ENCODE measurements at regions of chr6 and their contacts with region 1.

Region 1: GRCh38 chr6:168541307-168541706 is 100.3 kb downstream of the SMOC2 start:
- DNase-seq: no peak
- H3K4me3 ChIP-seq: no peak overlapping the region
- H3K27ac ChIP-seq: peak overlapping the region in 2 of 4 donors; percentile 42 to 79
- H3K4me1 ChIP-seq: peaks cover 0 to 36% (median 23%) of the 10 kb centered on the region in 4 donors
- H3K27me3 ChIP-seq: no peaks in the 10 kb centered on the region
- CTCF ChIP-seq: no peak
- EP300 ChIP-seq: no peak
- POLR2A ChIP-seq: no peak

Region 2: DNA sequence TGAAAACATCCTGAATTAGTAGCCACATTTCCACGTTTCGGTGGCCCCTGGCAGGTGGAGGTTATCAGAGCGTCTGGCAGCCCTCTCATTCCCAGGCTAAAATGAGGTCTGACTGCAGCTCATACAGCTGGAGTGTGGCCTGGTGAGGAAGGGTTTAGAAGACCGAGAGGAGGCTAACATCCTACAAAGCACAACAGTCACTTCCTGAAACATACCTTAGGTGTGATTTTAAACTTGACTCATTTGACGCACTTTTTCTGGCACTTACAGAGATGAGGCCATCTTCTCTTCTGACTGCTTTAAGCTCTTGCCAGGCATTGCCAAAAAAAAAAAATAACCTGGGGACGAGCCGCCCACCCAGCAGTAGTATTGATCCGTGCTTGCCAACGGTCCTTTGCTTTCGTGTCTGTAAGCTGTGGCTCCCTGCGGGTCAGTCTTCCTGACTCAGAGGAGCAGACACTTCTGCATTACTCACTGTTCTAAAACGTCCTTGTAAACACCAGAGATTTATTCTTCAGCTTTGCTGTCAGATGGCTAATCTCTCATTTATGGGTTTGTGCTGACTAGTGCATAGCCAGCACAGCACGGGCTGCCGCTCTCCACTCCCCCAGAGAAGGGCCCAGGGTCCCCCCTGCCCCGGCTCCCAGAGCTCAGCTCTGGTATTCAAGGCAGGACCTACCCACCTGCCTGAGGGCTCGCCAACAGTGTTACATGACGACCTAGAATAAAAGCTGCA is 383.9 kb before region 1 on chr6:
- intact Hi-C with region 1: no loop called
- DNase-seq: peak; percentile 74
- H3K4me3 ChIP-seq: peak overlapping the region in 2 of 4 donors; percentile 3 to 28
- H3K27ac ChIP-seq: peak overlapping the region; percentile 42 to 83 (median 78)
- H3K4me1 ChIP-seq: peaks cover 2 to 80% (median 62%) of the 10 kb centered on the region in 4 donors
- H3K27me3 ChIP-seq: no peaks in the 10 kb centered on the region
- CTCF ChIP-seq: no peak
- EP300 ChIP-seq: peak; percentile 46 to 95 (median 78)
- POLR2A ChIP-seq: no peak

Region 3: DNA sequence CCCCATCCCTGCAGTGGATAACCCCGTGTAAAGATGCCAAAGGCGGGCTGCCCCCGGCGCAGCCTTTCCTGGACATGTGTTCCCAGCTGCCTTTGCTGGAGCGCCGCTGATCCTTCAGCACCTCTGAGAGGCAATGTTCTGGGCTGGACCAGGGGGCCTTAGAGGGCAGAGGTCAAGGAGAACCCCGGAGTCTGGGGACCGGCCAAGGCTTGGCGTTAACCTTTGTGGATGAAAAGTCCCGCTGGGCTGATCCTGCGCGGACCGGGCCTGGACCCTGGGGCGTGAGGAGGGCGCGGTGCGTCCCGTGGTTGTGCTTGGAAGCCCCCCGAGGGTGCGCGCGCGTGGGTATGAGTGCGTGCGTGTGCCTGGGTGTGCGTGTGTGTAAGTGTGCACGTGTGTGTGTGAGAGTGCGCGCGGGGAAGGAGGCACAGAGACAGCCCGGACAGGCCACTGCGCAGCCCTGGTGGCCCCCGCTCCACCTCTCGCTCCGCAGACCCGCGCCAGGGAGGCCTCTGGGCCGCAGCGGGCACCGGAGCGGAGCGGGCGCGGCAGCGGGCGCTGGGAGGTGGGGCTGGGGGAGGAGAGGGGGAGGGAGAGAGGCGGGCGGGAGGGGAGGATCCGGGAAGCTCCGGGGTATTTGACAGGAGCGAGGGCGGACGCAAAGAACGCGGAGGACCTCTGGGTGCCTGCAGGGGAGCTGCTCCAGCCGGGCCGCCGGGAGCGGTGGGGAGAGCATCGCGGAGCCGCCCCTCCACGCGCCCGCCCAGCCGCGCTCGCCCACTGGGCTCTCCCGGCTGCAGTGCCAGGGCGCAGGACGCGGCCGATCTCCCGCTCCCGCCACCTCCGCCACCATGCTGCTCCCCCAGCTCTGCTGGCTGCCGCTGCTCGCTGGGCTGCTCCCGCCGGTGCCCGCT is 100.5 kb before region 1 on chr6 and contains the start of gene SMOC2:
- intact Hi-C with region 1: loop called (anchors 2 kb)
- DNase-seq: no peak
- H3K4me3 ChIP-seq: peak within 1 kb of the TSS; percentile 49 to 75 (median 58)
- H3K27ac ChIP-seq: peak within 1 kb of the TSS; percentile 43 to 68 (median 56)
- H3K4me1 ChIP-seq: peaks cover 0 to 33% (median 24%) of the 10 kb centered on the region in 4 donors
- H3K27me3 ChIP-seq: peaks cover 0 to 16% (median 15%) of the 10 kb centered on the region in 3 donors
- CTCF ChIP-seq: no peak
- EP300 ChIP-seq: no peak
- POLR2A ChIP-seq: no peak
- total RNA-seq, gene SMOC2: 23.9 to 130 (median 52.9) TPM

Region 4: GRCh38 chr6:168450917-168451316 is 90.4 kb before region 1 on chr6:
- intact Hi-C with region 1: no loop called
- DNase-seq: no peak
- H3K4me3 ChIP-seq: no peak overlapping the region
- H3K27ac ChIP-seq: no peak overlapping the region
- H3K4me1 ChIP-seq: peaks cover 0 to 29% (median 21%) of the 10 kb centered on the region in 4 donors
- H3K27me3 ChIP-seq: no peaks in the 10 kb centered on the region
- CTCF ChIP-seq: no peak
- EP300 ChIP-seq: no peak
- POLR2A ChIP-seq: no peak

Region 5: GRCh38 chr6:168524571-168525001 is 16.7 kb before region 1 on chr6:
- intact Hi-C with region 1: no loop called
- DNase-seq: no peak
- H3K4me3 ChIP-seq: no peak overlapping the region
- H3K27ac ChIP-seq: peak overlapping the region in 1 of 4 donors; percentile 74
- H3K4me1 ChIP-seq: peaks cover 0 to 17% (median 16%) of the 10 kb centered on the region in 4 donors
- H3K27me3 ChIP-seq: no peaks in the 10 kb centered on the region
- CTCF ChIP-seq: no peak
- EP300 ChIP-seq: no peak
- POLR2A ChIP-seq: no peak

Region 6: GRCh38 chr6:168979254-168979653 is 437.9 kb after region 1 on chr6:
- intact Hi-C with region 1: no loop called
- DNase-seq: no peak
- H3K4me3 ChIP-seq: no peak overlapping the region
- H3K27ac ChIP-seq: peak overlapping the region in 3 of 4 donors; percentile 18 to 24 (median 18)
- H3K4me1 ChIP-seq: peaks cover 0 to 38% (median 12%) of the 10 kb centered on the region in 4 donors
- H3K27me3 ChIP-seq: no peaks in the 10 kb centered on the region
- CTCF ChIP-seq: no peak
- EP300 ChIP-seq: no peak
- POLR2A ChIP-seq: no peak

Measured in sigmoid colon (tissue), 7 donors.